CD14-positive monocyte (primary cell): ENCODE measurements at regions of chr1 and their contacts with region 1.

Region 1: GRCh38 chr1:174922121-174922520 is 77.6 kb upstream of the CACYBP start:
- DNase-seq: no peak
- H3K4me3 ChIP-seq: no peak overlapping the region
- H3K4me3 Mint-ChIP-seq: no peak overlapping the region
- H3K27ac ChIP-seq: no peak overlapping the region
- H3K27ac Mint-ChIP-seq: no peak overlapping the region
- H3K4me1 ChIP-seq: peaks cover 0 to under 1% of the 10 kb centered on the region in 2 donors
- H3K4me1 Mint-ChIP-seq: peaks cover 1% of the 10 kb centered on the region
- H3K27me3 ChIP-seq: no peaks in the 10 kb centered on the region
- H3K27me3 Mint-ChIP-seq: peaks cover 0 to 2% (median 2%) of the 10 kb centered on the region in 3 donors
- CTCF ChIP-seq: no peak

Region 2: GRCh38 chr1:174976436-174977108 is 54.5 kb after region 1 on chr1:
- intact Hi-C with region 1: loop called in 1 of 2 experiments (anchors 10 kb)
- DNase-seq: no peak
- H3K4me3 ChIP-seq: no peak overlapping the region
- H3K4me3 Mint-ChIP-seq: no peak overlapping the region
- H3K27ac ChIP-seq: peak overlapping the region in 1 of 2 donors; percentile 33
- H3K27ac Mint-ChIP-seq: peak overlapping the region in 2 of 7 donors; percentile 58 to 63
- H3K4me1 ChIP-seq: peaks cover 5 to 7% of the 10 kb centered on the region in 2 donors
- H3K4me1 Mint-ChIP-seq: peaks cover 13% of the 10 kb centered on the region
- H3K27me3 ChIP-seq: no peaks in the 10 kb centered on the region
- H3K27me3 Mint-ChIP-seq: no peaks in the 10 kb centered on the region
- CTCF ChIP-seq: no peak